Posterior cingulate gyrus (tissue), 11 donors: ENCODE measurements at regions of chr20 and their contacts with region 1.

Region 1: DNA sequence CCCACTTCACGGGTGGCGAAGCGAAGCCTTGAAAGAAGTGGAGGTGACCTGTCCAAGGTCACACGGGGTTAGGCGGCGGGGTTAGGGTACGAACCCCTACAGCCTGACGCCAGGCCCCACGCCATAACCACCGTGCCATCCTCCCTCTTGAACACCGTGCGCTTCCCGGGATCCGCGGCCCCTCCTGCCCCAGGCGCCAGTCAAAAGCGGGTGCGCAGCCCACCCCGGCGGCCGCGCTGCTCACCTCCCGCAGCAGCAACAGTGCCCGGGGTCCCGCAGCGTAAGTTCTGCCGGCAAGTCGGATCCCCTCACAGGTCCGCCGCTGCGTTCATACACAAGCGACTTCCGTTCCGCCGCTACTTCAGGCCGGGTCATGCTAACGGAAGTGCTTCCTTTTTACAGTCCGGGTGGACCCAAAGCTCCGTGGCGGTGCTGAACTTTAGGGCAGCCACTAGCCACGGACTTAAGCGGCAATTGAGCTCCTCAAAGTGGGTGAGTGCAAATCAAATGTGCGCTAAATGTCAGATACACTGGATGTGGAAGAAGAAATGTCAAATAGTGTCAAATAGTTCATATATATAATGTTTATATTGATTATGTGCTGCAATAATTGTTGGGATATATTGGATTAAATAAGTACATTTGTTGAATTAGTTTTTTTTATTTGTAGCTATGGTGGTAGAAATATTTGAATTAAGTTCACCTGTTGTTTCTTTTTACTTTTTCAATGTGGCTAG is at the start of gene CDK5RAP1:
- DNase-seq: peak; percentile 79 to 98 (median 86)

Region 2: GRCh38 chr20:33443512-33444239 is 42.3 kb after region 1 on chr20 and contains the start of gene SNTA1:
- intact Hi-C with region 1: loop called (anchors 2 kb)
- DNase-seq: peak; percentile 69 to 95 (median 78)